GM10248 (cell line): ENCODE measurements at regions of chr19 and their contacts with region 1.

Region 1: DNA sequence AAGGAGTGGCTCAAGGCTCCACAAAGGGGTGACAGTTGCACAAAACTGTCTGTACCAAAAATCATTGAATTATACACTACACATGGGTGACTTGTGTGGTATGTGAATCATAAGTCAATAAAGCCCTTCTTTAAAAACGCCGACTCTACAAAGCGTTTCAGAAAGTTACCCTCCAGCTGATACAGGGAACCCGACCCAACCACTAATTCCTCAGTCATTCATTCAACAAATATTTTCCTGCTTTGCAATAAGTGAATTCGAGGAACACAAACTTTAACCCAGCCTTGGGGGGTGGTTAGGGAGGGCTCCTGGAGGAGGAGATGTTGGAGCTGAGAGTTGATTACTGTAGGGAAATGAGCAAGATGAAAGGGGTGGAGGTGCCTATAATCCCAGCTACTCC is 32.0 kb downstream of the LTBP4 start:
- DNase-seq: no peak
- CTCF ChIP-seq: no peak

Region 2: DNA sequence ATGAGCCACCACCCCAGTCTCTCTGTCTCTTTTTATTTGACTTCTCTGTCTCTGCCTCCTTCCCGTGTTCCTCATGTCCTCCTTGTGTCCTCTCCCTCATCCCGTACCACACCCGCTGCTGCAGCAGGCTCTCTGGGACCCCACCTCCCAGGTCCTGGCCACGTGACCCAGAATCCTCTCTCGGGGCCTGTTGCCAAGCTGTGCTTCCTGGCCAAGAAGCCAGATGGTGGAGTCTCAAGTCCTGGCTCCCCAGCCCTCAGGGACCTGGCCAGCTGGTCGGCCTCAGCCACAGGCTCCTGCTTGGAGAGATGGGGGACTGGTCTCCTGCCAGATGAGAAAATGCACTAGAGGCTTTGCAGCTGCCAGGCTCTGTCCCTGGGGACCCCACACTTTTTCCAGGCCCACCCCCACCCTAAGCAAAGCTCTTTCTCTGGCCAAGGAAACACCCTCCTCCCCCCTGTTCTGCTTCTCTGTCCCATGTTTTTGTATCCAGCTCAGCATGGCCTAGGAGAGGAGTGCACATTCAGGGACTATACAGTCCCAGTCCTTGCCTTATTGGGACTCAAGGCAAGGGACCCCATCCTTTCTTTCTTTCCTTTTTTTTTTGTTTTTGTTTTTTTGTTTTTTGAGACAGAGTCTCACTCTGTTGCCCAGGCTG is 90.9 kb before region 1 on chr19:
- CTCF ChIA-PET with region 1: interaction called, 18 read pairs
- POLR2A ChIA-PET with region 1: no interaction called
- DNase-seq: no peak
- CTCF ChIP-seq: no peak

Region 3: DNA sequence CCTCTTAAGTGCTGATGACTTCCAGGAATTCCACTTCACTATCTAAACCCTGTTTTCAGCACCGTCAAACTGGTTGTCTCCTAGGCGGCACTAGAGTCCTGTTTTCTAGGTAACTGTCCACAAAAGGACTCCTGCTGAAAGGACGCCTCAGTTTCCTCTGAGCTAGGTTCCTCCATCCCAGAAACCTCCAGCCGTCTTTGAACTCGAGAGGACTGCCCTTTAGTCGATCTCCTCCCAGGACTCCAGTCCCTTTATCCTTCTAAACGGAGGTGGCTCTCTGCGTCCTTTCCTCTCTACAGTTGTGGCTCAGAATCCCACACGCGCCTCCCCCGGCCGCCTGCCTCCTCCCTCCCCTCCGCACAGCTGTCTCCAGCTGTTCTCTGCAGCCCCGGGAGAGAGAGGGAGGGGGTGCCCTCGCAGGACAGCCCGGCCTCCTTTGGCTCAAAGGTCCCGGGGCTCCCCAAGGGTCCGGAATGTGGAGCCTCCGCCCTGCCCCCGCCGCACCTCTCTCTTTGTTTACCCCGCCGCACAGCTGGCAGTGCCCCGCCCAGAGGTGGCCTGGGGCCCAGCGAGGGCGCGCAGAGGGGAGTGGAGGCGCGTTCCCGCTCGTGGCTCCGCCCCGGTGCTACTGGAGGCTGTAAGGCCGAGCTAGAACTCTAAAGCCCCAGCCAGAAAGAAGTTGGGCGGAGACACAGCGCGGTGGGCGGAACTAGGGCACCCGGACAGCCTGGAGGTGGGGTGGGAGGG is 29.6 kb before region 1 on chr19:
- CTCF ChIA-PET with region 1: interaction called, 42 read pairs
- POLR2A ChIA-PET with region 1: no interaction called
- DNase-seq: peak; percentile 94
- CTCF ChIP-seq: no peak

Region 4: GRCh38 chr19:40609561-40610395 is 23.4 kb before region 1 on chr19:
- CTCF ChIA-PET with region 1: interaction called, 47 read pairs
- POLR2A ChIA-PET with region 1: no interaction called
- DNase-seq: peak; percentile 91
- CTCF ChIP-seq: no peak

Region 5: GRCh38 chr19:40650749-40651305 is 17.6 kb after region 1 on chr19:
- CTCF ChIA-PET with region 1: interaction called, 74 read pairs
- POLR2A ChIA-PET with region 1: no interaction called
- DNase-seq: no peak
- CTCF ChIP-seq: no peak

Region 6: GRCh38 chr19:40777937-40778705 is 144.9 kb after region 1 on chr19 and contains the start of gene RAB4B:
- CTCF ChIA-PET with region 1: interaction called, 15 read pairs
- POLR2A ChIA-PET with region 1: no interaction called
- DNase-seq: peak; percentile 95
- CTCF ChIP-seq: no peak